Activated CD8-positive, alpha-beta memory T cell treated with anti-CD3 and anti-CD28 coated beads, Interleukin-2, amount 10 ng/mL, durations not matched to agents 7 days and 5 days (primary cell): ENCODE measurements at regions of chr11 and their contacts with region 1.

Region 1: GRCh38 chr11:6619004-6619745 is at the start of gene TPP1:
- DNase-seq: peak; percentile 96
- ATAC-seq: peak; percentile 96
- H3K4me3 Mint-ChIP-seq: no peak within 1 kb of the TSS
- H3K27ac Mint-ChIP-seq: no peak within 1 kb of the TSS
- H3K4me1 Mint-ChIP-seq: peaks cover 2% of the 10 kb centered on the region
- H3K27me3 Mint-ChIP-seq: no peaks in the 10 kb centered on the region
- total RNA-seq, gene TPP1: 76.8 to 79.3 TPM

Region 2: GRCh38 chr11:6603287-6604080 is 15.7 kb before region 1 on chr11 and contains the starts of genes ILK and RRP8:
- CTCF ChIA-PET with region 1: interaction called, 36 read pairs
- DNase-seq: peak; percentile 94
- ATAC-seq: peak; percentile 78
- H3K4me3 Mint-ChIP-seq: no peak within 1 kb of the TSS
- H3K27ac Mint-ChIP-seq: no peak within 1 kb of the TSS
- H3K4me1 Mint-ChIP-seq: peaks cover 30% of the 10 kb centered on the region
- H3K27me3 Mint-ChIP-seq: no peaks in the 10 kb centered on the region
- total RNA-seq, gene ILK: 151 to 161 TPM
- total RNA-seq, gene RRP8: 25.6 to 33.1 TPM